Colonic mucosa (tissue), 4 donors: ENCODE measurements at regions of chr17 and their contacts with region 1.

Region 1: DNA sequence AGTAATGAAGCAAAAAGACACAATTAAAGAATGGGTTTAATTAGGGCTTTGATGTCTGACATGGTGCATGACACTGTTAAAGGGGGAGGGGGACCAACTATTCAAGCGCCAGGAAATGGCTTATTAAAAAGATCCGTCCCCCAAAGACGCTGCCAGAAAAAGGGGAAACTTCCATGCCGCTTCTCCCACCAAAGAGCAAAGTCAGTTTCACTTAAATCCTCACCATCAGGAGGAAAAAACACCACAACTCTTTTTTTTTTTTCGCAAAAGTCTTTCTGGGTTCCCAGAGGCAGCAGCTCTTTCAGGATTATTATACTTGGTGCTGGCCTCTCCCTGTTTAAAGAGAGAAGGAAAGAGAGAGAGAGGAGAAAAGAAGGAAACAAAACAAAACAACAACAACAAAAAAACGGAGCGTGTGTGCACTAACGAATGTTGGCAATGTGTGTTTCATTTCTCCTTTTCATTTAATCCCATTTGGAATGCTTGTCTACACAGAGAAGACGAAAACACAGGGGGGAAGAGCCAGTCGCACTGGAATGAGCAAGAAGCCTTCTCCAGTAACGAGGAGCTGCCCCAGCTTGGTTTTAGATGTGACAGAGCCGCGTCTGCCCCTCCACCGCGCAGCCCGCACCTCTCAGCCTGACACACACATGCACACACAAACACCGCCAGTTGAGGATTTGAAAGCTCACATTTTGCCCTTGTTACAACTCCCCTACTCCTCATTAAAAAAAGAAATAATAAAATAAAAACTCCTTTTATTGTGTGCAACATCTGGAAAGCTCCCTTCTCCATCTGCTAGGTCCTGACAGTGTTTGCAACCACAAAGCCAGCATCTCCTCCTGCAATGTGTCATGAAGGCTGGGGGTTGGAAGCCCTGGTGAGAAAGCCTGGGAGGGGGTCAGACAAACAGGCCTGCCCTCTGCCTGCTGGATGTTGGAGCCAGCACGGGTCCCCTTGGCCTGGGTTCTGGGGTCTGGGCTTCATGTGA is 32.7 kb upstream of the AXIN2 start:
- DNase-seq: no peak
- H3K4me3 ChIP-seq: no peak overlapping the region
- H3K27ac ChIP-seq: no peak overlapping the region
- H3K4me1 ChIP-seq: no peaks in the 10 kb centered on the region
- H3K27me3 ChIP-seq: no peaks in the 10 kb centered on the region
- CTCF ChIP-seq: no peak

Region 2: DNA sequence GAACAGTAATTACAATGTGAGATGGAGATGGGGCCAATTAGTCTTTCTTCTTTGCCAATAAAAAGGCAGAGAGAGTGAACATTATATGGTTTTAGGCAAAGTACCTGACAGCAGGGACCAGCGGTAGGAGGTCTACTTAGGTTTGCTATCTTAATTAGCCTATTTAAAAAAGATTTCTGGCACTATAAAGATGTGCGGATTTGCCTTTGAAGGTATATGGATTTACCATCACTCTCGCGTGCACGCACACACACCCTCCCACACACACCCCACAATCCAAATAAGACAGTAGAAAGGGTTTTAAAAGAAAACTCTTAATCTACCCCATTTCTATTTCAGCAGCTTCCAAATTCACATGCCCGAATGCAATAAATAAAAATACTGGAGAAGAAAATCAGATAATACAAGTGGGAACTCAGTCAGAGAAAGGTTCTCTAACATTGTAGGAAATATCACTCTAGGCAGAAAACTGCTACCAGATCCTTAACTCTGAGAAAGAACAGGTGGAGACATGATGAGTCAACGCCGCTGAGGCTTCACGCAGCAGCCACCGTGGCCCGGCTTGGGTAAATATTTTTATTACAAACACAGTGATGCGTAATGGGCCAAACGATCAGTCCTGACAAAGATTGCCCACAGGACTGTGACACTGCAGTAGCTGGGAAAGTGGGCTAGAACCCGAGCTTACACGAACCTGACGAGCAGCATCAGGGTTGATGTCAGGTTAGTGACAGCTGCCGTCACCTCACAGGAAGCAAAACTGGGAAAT is 33.9 kb after region 1 on chr17:
- intact Hi-C with region 1: loop called (anchors 2 kb)
- DNase-seq: peak; percentile 79
- H3K4me3 ChIP-seq: no peak overlapping the region
- H3K27ac ChIP-seq: peak overlapping the region; percentile 8
- H3K4me1 ChIP-seq: peaks cover 3% of the 10 kb centered on the region
- H3K27me3 ChIP-seq: no peaks in the 10 kb centered on the region
- CTCF ChIP-seq: no peak